H1 (cell line): ENCODE measurements at regions of chr1 and their contacts with region 1.

Region 1: GRCh38 chr1:154404984-154405761 is at the start of gene IL6R:
- DNase-seq: peak in 1 of 2 experiments; percentile 83
- H3K4me3 ChIP-seq: peak within 1 kb of the TSS; percentile 28 to 64 (median 58)
- H3K27ac ChIP-seq: no peak within 1 kb of the TSS
- H3K4me1 ChIP-seq: peaks cover 0 to 8% (median 6%) of the 10 kb centered on the region in 4 experiments; a peak in 4 of 7 replicates
- H3K27me3 ChIP-seq: peaks cover 9 to 36% (median 26%) of the 10 kb centered on the region in 4 experiments
- CTCF ChIP-seq: peak; percentile 51 to 56 (median 53); a peak in 3 of 4 replicates
- EP300 ChIP-seq: no peak
- POLR2A ChIP-seq: no peak
- RAD21 ChIP-seq: peak; percentile 50 to 64
- total RNA-seq, gene IL6R: 2.6 and 3.0 TPM in 2 replicates

Region 2: GRCh38 chr1:154344977-154345837 is 60.0 kb before region 1 on chr1:
- CTCF ChIA-PET with region 1: interaction called, 11 read pairs
- POLR2A ChIA-PET with region 1: no interaction called
- DNase-seq: peak in 1 of 2 experiments; percentile 86
- H3K4me3 ChIP-seq: no peak overlapping the region
- H3K27ac ChIP-seq: no peak overlapping the region
- H3K4me1 ChIP-seq: peaks cover 0 to 2% (median 0%) of the 10 kb centered on the region in 4 experiments; a peak in 2 of 7 replicates
- H3K27me3 ChIP-seq: no peaks in the 10 kb centered on the region
- CTCF ChIP-seq: peak in 2 of 3 experiments; percentile 80 to 95; a peak in 3 of 4 replicates
- EP300 ChIP-seq: no peak
- POLR2A ChIP-seq: no peak
- RAD21 ChIP-seq: peak; percentile 65 to 80

Region 3: GRCh38 chr1:154459080-154459479 is 53.9 kb after region 1 on chr1:
- CTCF ChIA-PET with region 1: no interaction called
- POLR2A ChIA-PET with region 1: no interaction called
- DNase-seq: no peak
- H3K4me3 ChIP-seq: no peak overlapping the region
- H3K27ac ChIP-seq: no peak overlapping the region
- H3K4me1 ChIP-seq: 0 out of 7 replicates have a peak, but pooled peaks cover 0 to 1% (median 0%) of the 10 kb centered on the region in 4 experiments
- H3K27me3 ChIP-seq: no peaks in the 10 kb centered on the region
- CTCF ChIP-seq: no peak
- EP300 ChIP-seq: no peak
- POLR2A ChIP-seq: no peak
- RAD21 ChIP-seq: no peak